Right cardiac atrium (tissue), 5 donors: ENCODE measurements at regions of chr1 and their contacts with region 1.

Region 1: GRCh38 chr1:164617377-164618201 is 58.6 kb downstream of the PBX1 start:
- DNase-seq: peak in 1 of 3 donors; percentile 64
- ATAC-seq: no peak
- H3K4me3 ChIP-seq: no peak overlapping the region
- H3K27ac ChIP-seq: no peak overlapping the region
- H3K4me1 ChIP-seq: peaks cover 20% of the 10 kb centered on the region
- H3K27me3 ChIP-seq: no peaks in the 10 kb centered on the region

Region 2: GRCh38 chr1:164087906-164088453 is 529.6 kb before region 1 on chr1:
- intact Hi-C with region 1: no loop called
- DNase-seq: no peak
- ATAC-seq: no peak
- H3K4me3 ChIP-seq: no peak overlapping the region
- H3K27ac ChIP-seq: no peak overlapping the region
- H3K4me1 ChIP-seq: no peaks in the 10 kb centered on the region
- H3K27me3 ChIP-seq: no peaks in the 10 kb centered on the region

Region 3: DNA sequence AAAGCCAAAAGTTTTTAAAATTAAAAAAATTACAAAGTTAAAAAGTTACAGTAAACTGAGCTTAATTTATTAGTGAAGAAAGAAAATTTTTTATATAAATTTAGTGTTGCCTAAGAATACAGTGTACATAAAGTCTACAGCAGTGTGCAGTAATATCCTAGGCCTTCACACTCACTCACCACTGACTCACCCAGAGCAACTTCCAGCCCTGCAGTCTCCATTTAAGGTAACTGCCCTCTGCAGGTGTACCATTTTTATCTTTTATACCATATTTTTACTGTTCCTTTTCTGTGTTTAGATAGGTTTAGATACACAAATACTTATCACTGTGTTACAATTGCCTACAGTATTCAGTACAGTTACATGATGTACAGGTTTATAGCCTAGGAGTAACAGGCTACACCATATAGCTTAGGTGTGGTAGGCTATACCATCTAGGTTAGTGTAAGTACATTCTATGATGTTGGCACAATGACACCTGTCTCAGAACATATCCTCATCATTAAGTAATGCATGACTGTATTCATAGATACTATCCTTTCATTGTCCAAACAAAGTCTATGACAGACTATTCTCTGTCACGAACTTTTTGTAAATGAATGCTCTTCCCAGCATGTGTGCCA is 137.2 kb before region 1 on chr1:
- intact Hi-C with region 1: no loop called
- DNase-seq: no peak
- ATAC-seq: no peak
- H3K4me3 ChIP-seq: no peak overlapping the region
- H3K27ac ChIP-seq: no peak overlapping the region
- H3K4me1 ChIP-seq: no peaks in the 10 kb centered on the region
- H3K27me3 ChIP-seq: no peaks in the 10 kb centered on the region

Region 4: DNA sequence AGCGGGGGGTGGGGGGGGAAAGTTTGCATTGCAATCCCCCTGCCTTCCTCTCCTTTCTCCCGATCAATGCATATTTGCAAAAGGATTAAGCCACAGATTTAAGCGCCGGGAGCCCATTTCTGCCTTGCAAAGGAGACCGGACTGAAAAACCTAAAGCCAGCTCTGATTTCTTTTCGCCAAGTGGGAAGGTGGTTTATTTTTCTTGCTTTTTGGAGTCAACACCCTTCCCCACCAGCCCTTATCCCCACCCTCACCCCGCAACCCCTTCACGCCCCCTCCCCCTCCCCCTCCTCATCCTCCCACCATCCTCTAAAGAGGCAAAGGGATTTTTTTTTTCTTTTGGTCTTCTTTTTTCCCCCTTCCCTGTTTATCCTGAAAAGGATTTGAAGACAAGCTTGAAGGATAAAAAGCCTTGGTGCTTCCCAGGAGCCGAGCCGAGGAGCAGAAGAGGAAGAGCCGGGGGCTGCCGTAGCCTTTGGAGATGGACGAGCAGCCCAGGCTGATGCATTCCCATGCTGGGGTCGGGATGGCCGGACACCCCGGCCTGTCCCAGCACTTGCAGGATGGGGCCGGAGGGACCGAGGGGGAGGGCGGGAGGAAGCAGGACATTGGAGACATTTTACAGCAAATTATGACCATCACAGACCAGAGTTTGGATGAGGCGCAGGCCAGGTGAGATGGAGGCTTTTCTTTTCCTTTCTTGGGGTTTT is 58.1 kb before region 1 on chr1:
- intact Hi-C with region 1: loop called in 1 of 4 experiments (anchors 10 kb)
- DNase-seq: peak; percentile 44 to 70 (median 70)
- ATAC-seq: peak; percentile 42 to 60
- H3K4me3 ChIP-seq: peak overlapping the region; percentile 96
- H3K27ac ChIP-seq: peak overlapping the region; percentile 99
- H3K4me1 ChIP-seq: no peaks in the 10 kb centered on the region
- H3K27me3 ChIP-seq: no peaks in the 10 kb centered on the region

Region 5: DNA sequence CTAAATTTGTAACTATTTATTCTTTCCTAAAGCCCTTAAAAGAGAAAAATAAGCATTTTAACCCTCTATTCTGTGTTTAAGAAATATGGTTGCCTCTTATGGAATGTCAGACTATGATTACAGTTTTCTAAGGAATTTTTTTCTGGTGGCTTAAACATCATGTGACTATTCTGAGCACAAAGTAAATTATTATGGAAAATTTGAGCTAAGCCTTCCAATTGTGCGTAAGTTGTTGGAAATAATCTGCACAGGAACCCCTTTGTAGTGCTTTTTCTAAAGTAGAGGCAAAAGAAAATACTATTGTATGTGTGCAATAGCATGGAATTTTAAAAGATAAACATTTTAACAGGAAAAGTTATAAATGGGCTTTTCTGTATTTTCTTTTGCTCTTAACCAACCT is 196.2 kb after region 1 on chr1:
- intact Hi-C with region 1: no loop called
- DNase-seq: no peak
- ATAC-seq: no peak
- H3K4me3 ChIP-seq: no peak overlapping the region
- H3K27ac ChIP-seq: no peak overlapping the region
- H3K4me1 ChIP-seq: no peaks in the 10 kb centered on the region
- H3K27me3 ChIP-seq: no peaks in the 10 kb centered on the region